Adrenal gland (tissue), 19 donors: ENCODE measurements at regions of chr4 and their contacts with region 1.

Region 1: GRCh38 chr4:56977321-56978012 is at the start of gene NOA1:
- DNase-seq: peak; percentile 97 to 100 (median 99)
- H3K4me3 ChIP-seq: peak within 1 kb of the TSS; percentile 44 to 88 (median 67)
- H3K27ac ChIP-seq: peak within 1 kb of the TSS; percentile 75 to 96 (median 88)
- H3K4me1 ChIP-seq: peaks cover 29 to 47% of the 10 kb centered on the region in 2 donors
- H3K27me3 ChIP-seq: no peaks in the 10 kb centered on the region
- CTCF ChIP-seq: no peak
- POLR2A ChIP-seq: peak; percentile 46 to 89
- total RNA-seq, gene NOA1: 9.1 to 30.0 (median 22.1) TPM

Region 2: GRCh38 chr4:56907489-56908205 is 69.8 kb before region 1 on chr4 and contains the start of gene REST:
- intact Hi-C with region 1: loop called (anchors 5 kb)
- DNase-seq: peak; percentile 65 to 80 (median 73)
- H3K4me3 ChIP-seq: peak within 1 kb of the TSS; percentile 60 to 96 (median 82)
- H3K27ac ChIP-seq: peak within 1 kb of the TSS; percentile 79 to 97 (median 92)
- H3K4me1 ChIP-seq: peaks cover 0 to 26% of the 10 kb centered on the region in 2 donors
- H3K27me3 ChIP-seq: no peaks in the 10 kb centered on the region
- CTCF ChIP-seq: peak in 1 of 6 experiments; percentile 1
- POLR2A ChIP-seq: peak; percentile 72 to 84
- total RNA-seq, gene REST: 19.8 to 42.3 (median 32.8) TPM

Region 3: GRCh38 chr4:56927196-56927595 is 50.3 kb before region 1 on chr4:
- intact Hi-C with region 1: loop called in 1 of 2 experiments (anchors 5 kb)
- DNase-seq: no peak
- H3K4me3 ChIP-seq: no peak overlapping the region
- H3K27ac ChIP-seq: no peak overlapping the region
- H3K4me1 ChIP-seq: no peaks in the 10 kb centered on the region
- H3K27me3 ChIP-seq: no peaks in the 10 kb centered on the region
- CTCF ChIP-seq: no peak
- POLR2A ChIP-seq: no peak

Region 4: DNA sequence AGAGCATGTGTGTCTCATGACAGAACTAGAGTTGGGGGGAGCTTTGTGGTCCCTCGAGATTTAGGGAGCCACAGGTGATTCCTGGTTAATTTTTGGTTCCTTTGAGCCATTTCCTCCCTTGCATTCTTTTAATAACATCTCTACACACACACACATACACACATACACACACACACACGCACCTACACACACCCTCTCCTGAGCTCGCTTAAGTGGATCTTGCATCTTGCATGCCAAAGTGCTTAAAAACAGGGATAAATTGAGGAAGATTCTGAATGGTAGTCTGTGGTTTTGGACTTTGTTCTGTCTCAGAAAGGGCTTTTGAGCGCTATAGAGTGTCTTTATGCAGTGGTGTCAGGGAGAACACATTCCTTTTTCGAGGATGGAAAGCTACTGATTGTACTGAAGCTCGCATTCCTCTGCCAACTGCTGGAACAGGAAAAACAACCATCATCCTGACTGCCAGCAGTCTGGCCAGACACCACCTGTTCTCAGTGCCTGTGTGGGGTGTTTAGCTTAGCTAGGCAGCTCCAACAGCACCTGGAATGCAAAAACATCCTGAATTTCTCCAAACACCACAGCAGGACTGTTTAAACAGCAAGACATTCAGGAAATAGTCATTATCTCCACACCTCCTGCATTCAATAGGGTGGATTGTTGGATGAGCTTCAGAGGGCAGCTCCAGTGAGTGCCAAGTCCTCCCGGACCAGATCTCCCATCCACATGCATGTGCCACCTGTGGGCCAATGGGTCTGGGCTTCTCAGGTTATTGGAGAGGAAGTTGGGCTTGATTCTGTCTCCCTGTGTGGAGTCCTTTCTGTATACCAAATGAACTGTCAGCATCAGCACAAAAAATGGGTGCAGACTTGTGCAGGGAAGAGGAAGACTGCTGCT is 154.6 kb after region 1 on chr4:
- intact Hi-C with region 1: no loop called
- DNase-seq: no peak
- H3K4me3 ChIP-seq: no peak overlapping the region
- H3K27ac ChIP-seq: no peak overlapping the region
- H3K4me1 ChIP-seq: no peaks in the 10 kb centered on the region
- H3K27me3 ChIP-seq: no peaks in the 10 kb centered on the region
- CTCF ChIP-seq: no peak
- POLR2A ChIP-seq: no peak

Region 5: GRCh38 chr4:57190601-57191481 is 213.4 kb after region 1 on chr4:
- intact Hi-C with region 1: no loop called
- DNase-seq: peak in 2 of 7 donors; percentile 20 to 33
- H3K4me3 ChIP-seq: no peak overlapping the region
- H3K27ac ChIP-seq: no peak overlapping the region
- H3K4me1 ChIP-seq: no peaks in the 10 kb centered on the region
- H3K27me3 ChIP-seq: peaks cover 10% of the 10 kb centered on the region
- CTCF ChIP-seq: peak in 2 of 6 experiments; percentile 23 to 46
- POLR2A ChIP-seq: no peak